CD4-positive, alpha-beta memory T cell (primary cell): ENCODE measurements at regions of chr7 and their contacts with region 1.

Region 1: GRCh38 chr7:1065263-1066260 is 21.2 kb downstream of the GPR146 start:
- DNase-seq: peak; percentile 79 to 84 (median 80)
- H3K4me3 ChIP-seq: peak overlapping the region in 1 of 2 donors; percentile 42
- H3K4me3 Mint-ChIP-seq: peak overlapping the region; percentile 25 to 79 (median 73)
- H3K27ac ChIP-seq: no peak overlapping the region
- H3K27ac Mint-ChIP-seq: peak overlapping the region in 1 of 7 donors; percentile 62
- H3K4me1 ChIP-seq: peaks cover 11% of the 10 kb centered on the region
- H3K4me1 Mint-ChIP-seq: peaks cover 6 to 28% (median 12%) of the 10 kb centered on the region in 4 donors
- H3K27me3 ChIP-seq: no peaks in the 10 kb centered on the region
- H3K27me3 Mint-ChIP-seq: no peaks in the 10 kb centered on the region

Region 2: GRCh38 chr7:909358-910329 is 155.9 kb before region 1 on chr7:
- CTCF ChIA-PET with region 1: interaction called, 19 read pairs
- POLR2A ChIA-PET with region 1: no interaction called
- intact Hi-C with region 1: loop called (anchors 1 kb)
- DNase-seq: peak in 1 of 5 donors; percentile 46
- H3K4me3 ChIP-seq: no peak overlapping the region
- H3K4me3 Mint-ChIP-seq: peak overlapping the region; percentile 35 to 77 (median 72)
- H3K27ac ChIP-seq: no peak overlapping the region
- H3K27ac Mint-ChIP-seq: peak overlapping the region in 3 of 7 donors; percentile 65 to 68 (median 67)
- H3K4me1 ChIP-seq: peaks cover 10% of the 10 kb centered on the region
- H3K4me1 Mint-ChIP-seq: peaks cover 2 to 14% (median 10%) of the 10 kb centered on the region in 4 donors
- H3K27me3 ChIP-seq: no peaks in the 10 kb centered on the region
- H3K27me3 Mint-ChIP-seq: no peaks in the 10 kb centered on the region

Region 3: GRCh38 chr7:1020849-1021251 is 44.7 kb before region 1 on chr7:
- CTCF ChIA-PET with region 1: interaction called, 11 read pairs
- POLR2A ChIA-PET with region 1: no interaction called
- intact Hi-C with region 1: loop called (anchors 1 kb)
- DNase-seq: peak in 1 of 5 donors; percentile 25
- H3K4me3 ChIP-seq: no peak overlapping the region
- H3K4me3 Mint-ChIP-seq: no peak overlapping the region
- H3K27ac ChIP-seq: no peak overlapping the region
- H3K27ac Mint-ChIP-seq: no peak overlapping the region
- H3K4me1 ChIP-seq: peaks cover 3% of the 10 kb centered on the region
- H3K4me1 Mint-ChIP-seq: peaks cover 5 to 23% (median 10%) of the 10 kb centered on the region in 4 donors
- H3K27me3 ChIP-seq: no peaks in the 10 kb centered on the region
- H3K27me3 Mint-ChIP-seq: no peaks in the 10 kb centered on the region

Region 4: DNA sequence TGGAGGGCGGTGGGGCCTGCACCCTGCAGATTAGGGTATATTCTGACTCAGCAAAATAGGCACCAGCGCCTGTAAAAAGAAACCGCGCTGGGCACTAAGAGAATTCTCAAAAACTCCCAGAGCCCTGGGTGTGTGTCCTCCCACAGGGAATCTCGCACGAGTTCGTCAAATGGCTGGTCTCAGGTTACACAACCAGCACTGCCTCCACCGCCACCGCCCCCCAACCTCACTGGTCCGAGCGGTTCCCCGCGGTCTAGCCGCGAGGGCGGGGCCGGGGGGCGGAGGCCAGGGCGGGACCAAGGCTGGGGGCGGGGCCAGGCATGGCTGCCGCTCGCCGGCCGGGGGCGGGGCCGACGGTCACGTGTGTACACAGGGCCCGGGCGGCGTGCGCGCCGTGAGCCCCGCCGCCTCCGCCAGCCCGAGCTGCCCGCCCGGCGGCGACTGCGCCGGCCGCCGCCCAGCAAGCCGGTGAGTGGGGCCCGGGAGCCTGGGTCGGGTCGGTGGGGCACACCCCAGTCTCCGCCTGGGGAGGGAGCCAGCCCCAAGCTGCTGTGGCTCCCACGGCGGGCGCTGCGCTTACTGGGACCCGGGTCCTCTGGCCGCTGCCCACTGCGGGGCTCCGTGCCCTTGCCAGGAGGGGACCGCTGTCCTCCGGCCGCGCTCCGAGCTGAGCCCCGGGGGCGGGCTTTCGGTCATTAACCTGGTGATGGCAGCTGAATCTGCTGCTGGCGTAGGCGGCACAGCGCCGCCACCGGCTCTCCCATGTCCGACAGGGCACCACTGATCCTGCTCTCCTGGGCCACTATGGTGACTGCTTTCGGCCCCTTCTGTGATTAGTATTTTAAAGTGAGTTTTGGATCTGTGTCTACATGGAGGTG is 21.1 kb before region 1 on chr7 and contains the start of gene GPR146:
- CTCF ChIA-PET with region 1: interaction called, 11 read pairs
- POLR2A ChIA-PET with region 1: interaction called, 13 read pairs
- intact Hi-C with region 1: loop called (anchors 2 kb)
- DNase-seq: peak; percentile 85 to 89 (median 86)
- H3K4me3 ChIP-seq: peak within 1 kb of the TSS; percentile 67 to 69
- H3K4me3 Mint-ChIP-seq: peak within 1 kb of the TSS; percentile 88 to 96 (median 92)
- H3K27ac ChIP-seq: peak within 1 kb of the TSS; percentile 55
- H3K27ac Mint-ChIP-seq: peak within 1 kb of the TSS; percentile 83 to 94 (median 91)
- H3K4me1 ChIP-seq: peaks cover 70% of the 10 kb centered on the region
- H3K4me1 Mint-ChIP-seq: peaks cover 49 to 74% (median 65%) of the 10 kb centered on the region in 4 donors
- H3K27me3 ChIP-seq: no peaks in the 10 kb centered on the region
- H3K27me3 Mint-ChIP-seq: no peaks in the 10 kb centered on the region
- total RNA-seq, gene GPR146: 8.8 to 10.1 TPM

Region 5: GRCh38 chr7:1151653-1152425 is 86.3 kb after region 1 on chr7:
- CTCF ChIA-PET with region 1: no interaction called
- POLR2A ChIA-PET with region 1: no interaction called
- intact Hi-C with region 1: no loop called
- DNase-seq: no peak
- H3K4me3 ChIP-seq: no peak overlapping the region
- H3K4me3 Mint-ChIP-seq: peak overlapping the region in 1 of 8 donors; percentile 48
- H3K27ac ChIP-seq: no peak overlapping the region
- H3K27ac Mint-ChIP-seq: peak overlapping the region in 2 of 7 donors; percentile 15 to 17
- H3K4me1 ChIP-seq: no peaks in the 10 kb centered on the region
- H3K4me1 Mint-ChIP-seq: no peaks in the 10 kb centered on the region
- H3K27me3 ChIP-seq: no peaks in the 10 kb centered on the region
- H3K27me3 Mint-ChIP-seq: no peaks in the 10 kb centered on the region